Adrenal gland (tissue), 19 donors: ENCODE measurements at regions of chr12 and their contacts with region 1.

Region 1: GRCh38 chr12:21697904-21698630 is 40.4 kb upstream of the LDHB start:
- DNase-seq: no peak
- H3K4me3 ChIP-seq: peak overlapping the region in 1 of 4 donors; percentile 26
- H3K27ac ChIP-seq: no peak overlapping the region
- H3K4me1 ChIP-seq: no peaks in the 10 kb centered on the region
- H3K27me3 ChIP-seq: no peaks in the 10 kb centered on the region
- CTCF ChIP-seq: peak; percentile 58 to 97 (median 71)
- POLR2A ChIP-seq: no peak

Region 2: GRCh38 chr12:21989819-21990412 is 291.8 kb after region 1 on chr12:
- intact Hi-C with region 1: loop called (anchors 5 to 10 kb)
- DNase-seq: peak in 2 of 7 donors; percentile 12 to 24
- H3K4me3 ChIP-seq: no peak overlapping the region
- H3K27ac ChIP-seq: no peak overlapping the region
- H3K4me1 ChIP-seq: no peaks in the 10 kb centered on the region
- H3K27me3 ChIP-seq: no peaks in the 10 kb centered on the region
- CTCF ChIP-seq: peak; percentile 47 to 75 (median 62)
- POLR2A ChIP-seq: no peak

Region 3: GRCh38 chr12:22029991-22030390 is 331.9 kb after region 1 on chr12:
- intact Hi-C with region 1: loop called in 1 of 2 experiments (anchors 10 kb)
- DNase-seq: peak in 1 of 7 donors; percentile 36
- H3K4me3 ChIP-seq: no peak overlapping the region
- H3K27ac ChIP-seq: no peak overlapping the region
- H3K4me1 ChIP-seq: peaks cover 7 to 9% of the 10 kb centered on the region in 2 donors
- H3K27me3 ChIP-seq: no peaks in the 10 kb centered on the region
- CTCF ChIP-seq: no peak
- POLR2A ChIP-seq: no peak